Activated B cell treated with CpG ODN at 0.5 μM for 24 hours (primary cell): ENCODE measurements at regions of chr6 and their contacts with region 1.

Region 1: GRCh38 chr6:5143634-5144311 is 58.6 kb downstream of the PPP1R3G start:
- DNase-seq: peak; percentile 69
- ATAC-seq: peak; percentile 53
- H3K4me3 Mint-ChIP-seq: no peak overlapping the region
- H3K27ac Mint-ChIP-seq: peak overlapping the region; percentile 46
- H3K4me1 Mint-ChIP-seq: peaks cover 27% of the 10 kb centered on the region
- H3K27me3 Mint-ChIP-seq: no peaks in the 10 kb centered on the region
- CTCF ChIP-seq: peak; percentile 98

Region 2: DNA sequence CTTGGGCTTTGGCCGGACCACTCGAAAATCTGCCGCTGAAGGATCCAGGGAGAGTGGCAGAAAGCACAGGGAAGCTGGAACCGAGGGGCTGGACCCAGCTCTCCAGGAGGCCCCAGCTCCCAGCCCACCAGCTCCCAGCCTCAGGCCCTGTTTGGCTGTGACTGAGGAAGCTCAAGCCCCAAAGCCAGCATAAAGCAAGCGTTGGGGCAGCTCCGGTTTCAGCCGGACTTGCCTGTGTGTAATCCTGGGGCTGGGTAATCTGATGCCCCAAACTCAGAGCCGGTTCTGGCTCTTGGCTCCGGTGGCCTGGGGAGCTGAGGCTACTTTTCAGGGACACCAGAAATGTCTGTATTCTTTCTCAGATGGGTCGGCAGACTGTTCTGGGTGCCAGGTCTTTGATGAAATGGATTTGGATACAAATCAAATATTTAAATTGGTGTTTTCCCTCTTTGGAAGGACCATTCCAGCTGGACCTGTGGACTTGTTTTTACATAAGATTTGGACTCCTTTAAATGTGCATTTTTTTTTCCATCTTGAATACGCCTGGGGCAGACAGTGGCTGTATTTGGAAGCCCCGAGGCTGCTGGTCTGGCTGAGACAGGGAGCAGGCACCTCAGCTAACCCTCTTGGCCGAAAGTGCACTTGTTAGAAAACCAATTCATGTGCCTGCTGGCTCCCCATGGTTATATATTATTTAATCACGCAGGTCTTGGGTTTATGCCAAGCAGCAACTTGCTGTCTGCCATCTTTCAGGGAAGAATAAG is 169.6 kb before region 1 on chr6:
- CTCF ChIA-PET with region 1: no interaction called
- POLR2A ChIA-PET with region 1: no interaction called
- intact Hi-C with region 1: no loop called
- DNase-seq: no peak
- ATAC-seq: no peak
- H3K4me3 Mint-ChIP-seq: no peak overlapping the region
- H3K27ac Mint-ChIP-seq: no peak overlapping the region
- H3K4me1 Mint-ChIP-seq: no peaks in the 10 kb centered on the region
- H3K27me3 Mint-ChIP-seq: peaks cover 13% of the 10 kb centered on the region
- CTCF ChIP-seq: no peak

Region 3: DNA sequence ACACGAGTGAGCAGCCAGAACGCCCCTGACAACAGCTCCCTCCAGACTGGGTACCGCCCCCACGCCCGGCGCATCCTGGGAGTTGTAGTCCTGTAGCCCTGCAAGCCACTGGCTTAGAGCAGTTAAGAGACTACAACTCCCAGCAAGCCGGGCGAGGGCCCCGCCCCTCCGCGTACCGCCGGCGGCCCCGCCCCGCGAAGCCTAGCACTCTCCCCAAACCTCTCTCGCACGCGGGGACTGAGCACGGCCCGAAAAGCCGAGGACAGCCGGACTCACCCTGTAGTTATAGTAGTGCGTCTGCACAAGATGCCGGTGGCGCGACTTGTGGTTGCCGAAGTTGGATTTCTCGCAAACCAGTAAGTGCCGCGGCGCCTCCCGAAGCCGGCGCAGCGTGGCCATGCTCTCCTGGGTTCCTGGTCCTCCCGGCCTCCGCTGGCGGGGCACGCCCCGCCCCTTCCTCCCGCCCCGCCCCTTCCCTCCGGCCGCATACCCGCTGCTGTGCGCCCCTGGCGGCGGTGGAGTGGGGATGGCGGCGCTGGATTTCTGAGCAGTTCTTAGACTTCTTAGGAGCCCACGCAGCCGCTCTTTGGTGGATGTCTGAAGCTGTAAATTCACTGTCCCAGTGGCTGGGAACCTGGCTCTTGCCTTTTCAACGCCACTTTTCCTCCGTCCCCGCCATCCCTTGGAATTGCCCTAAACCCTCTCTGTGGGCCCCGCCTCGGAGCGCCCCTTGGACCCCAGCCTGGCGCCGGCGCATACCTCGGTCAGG is 140.0 kb before region 1 on chr6 and contains the start of gene RPP40:
- CTCF ChIA-PET with region 1: no interaction called
- POLR2A ChIA-PET with region 1: no interaction called
- intact Hi-C with region 1: loop called (anchors 5 kb)
- DNase-seq: peak; percentile 98
- ATAC-seq: peak; percentile 94
- H3K4me3 Mint-ChIP-seq: peak within 1 kb of the TSS; percentile 94
- H3K27ac Mint-ChIP-seq: peak within 1 kb of the TSS; percentile 98
- H3K4me1 Mint-ChIP-seq: peaks cover 13% of the 10 kb centered on the region
- H3K27me3 Mint-ChIP-seq: no peaks in the 10 kb centered on the region
- CTCF ChIP-seq: no peak
- total RNA-seq, gene RPP40: 5.9 and 7.1 TPM in 2 replicates

Region 4: GRCh38 chr6:5159148-5159547 is 15.4 kb after region 1 on chr6:
- CTCF ChIA-PET with region 1: no interaction called
- POLR2A ChIA-PET with region 1: no interaction called
- intact Hi-C with region 1: no loop called
- DNase-seq: no peak
- ATAC-seq: no peak
- H3K4me3 Mint-ChIP-seq: no peak overlapping the region
- H3K27ac Mint-ChIP-seq: no peak overlapping the region
- H3K4me1 Mint-ChIP-seq: no peaks in the 10 kb centered on the region
- H3K27me3 Mint-ChIP-seq: no peaks in the 10 kb centered on the region
- CTCF ChIP-seq: no peak

Region 5: GRCh38 chr6:5214570-5215052 is 70.8 kb after region 1 on chr6:
- CTCF ChIA-PET with region 1: interaction called, 12 read pairs
- POLR2A ChIA-PET with region 1: no interaction called
- intact Hi-C with region 1: no loop called
- DNase-seq: peak; percentile 20
- ATAC-seq: no peak
- H3K4me3 Mint-ChIP-seq: no peak overlapping the region
- H3K27ac Mint-ChIP-seq: no peak overlapping the region
- H3K4me1 Mint-ChIP-seq: peaks cover 11% of the 10 kb centered on the region
- H3K27me3 Mint-ChIP-seq: no peaks in the 10 kb centered on the region
- CTCF ChIP-seq: no peak

Region 6: DNA sequence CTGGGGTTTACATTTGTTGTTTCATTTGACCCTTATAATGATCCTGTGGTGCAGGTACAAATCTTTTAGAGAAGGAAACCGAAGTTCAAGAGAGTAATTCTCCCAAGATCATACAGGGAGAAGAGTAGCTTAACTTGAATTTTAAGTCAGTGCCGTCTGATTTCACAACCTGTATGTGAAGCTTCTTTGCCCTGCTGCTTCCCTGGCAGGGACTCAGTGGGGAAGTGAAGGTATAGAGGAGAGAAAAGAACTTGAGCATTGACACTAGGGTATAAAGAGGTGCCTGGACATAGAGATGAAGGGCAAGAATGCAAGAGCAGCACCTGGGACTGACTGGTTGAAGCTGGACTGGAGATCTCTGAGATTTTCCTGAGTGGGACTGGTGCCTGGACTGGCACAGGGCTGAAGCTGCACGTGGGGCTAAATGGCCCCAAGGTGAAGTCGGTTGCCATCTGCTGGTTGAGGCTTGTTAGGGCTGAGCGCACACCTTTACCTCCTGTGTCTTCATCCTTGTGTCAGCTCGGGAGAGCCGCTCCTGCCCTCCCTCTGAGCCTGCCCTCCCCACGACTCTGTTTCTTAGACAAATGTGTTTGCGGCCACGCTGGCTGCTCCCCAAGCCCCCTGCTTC is 159.3 kb after region 1 on chr6:
- CTCF ChIA-PET with region 1: interaction called, 93 read pairs
- POLR2A ChIA-PET with region 1: interaction called, 12 read pairs
- intact Hi-C with region 1: loop called (anchors 1 kb)
- DNase-seq: peak; percentile 40
- ATAC-seq: peak; percentile 70
- H3K4me3 Mint-ChIP-seq: peak overlapping the region; percentile 77
- H3K27ac Mint-ChIP-seq: peak overlapping the region; percentile 84
- H3K4me1 Mint-ChIP-seq: peaks cover 40% of the 10 kb centered on the region
- H3K27me3 Mint-ChIP-seq: no peaks in the 10 kb centered on the region
- CTCF ChIP-seq: no peak

Region 7: GRCh38 chr6:5398530-5398929 is 254.8 kb after region 1 on chr6:
- CTCF ChIA-PET with region 1: interaction called, 37 read pairs
- POLR2A ChIA-PET with region 1: no interaction called
- intact Hi-C with region 1: loop called (anchors 1 kb)
- DNase-seq: no peak
- ATAC-seq: peak; percentile 87
- H3K4me3 Mint-ChIP-seq: no peak overlapping the region
- H3K27ac Mint-ChIP-seq: no peak overlapping the region
- H3K4me1 Mint-ChIP-seq: peaks cover 2% of the 10 kb centered on the region
- H3K27me3 Mint-ChIP-seq: no peaks in the 10 kb centered on the region
- CTCF ChIP-seq: no peak

Region 8: DNA sequence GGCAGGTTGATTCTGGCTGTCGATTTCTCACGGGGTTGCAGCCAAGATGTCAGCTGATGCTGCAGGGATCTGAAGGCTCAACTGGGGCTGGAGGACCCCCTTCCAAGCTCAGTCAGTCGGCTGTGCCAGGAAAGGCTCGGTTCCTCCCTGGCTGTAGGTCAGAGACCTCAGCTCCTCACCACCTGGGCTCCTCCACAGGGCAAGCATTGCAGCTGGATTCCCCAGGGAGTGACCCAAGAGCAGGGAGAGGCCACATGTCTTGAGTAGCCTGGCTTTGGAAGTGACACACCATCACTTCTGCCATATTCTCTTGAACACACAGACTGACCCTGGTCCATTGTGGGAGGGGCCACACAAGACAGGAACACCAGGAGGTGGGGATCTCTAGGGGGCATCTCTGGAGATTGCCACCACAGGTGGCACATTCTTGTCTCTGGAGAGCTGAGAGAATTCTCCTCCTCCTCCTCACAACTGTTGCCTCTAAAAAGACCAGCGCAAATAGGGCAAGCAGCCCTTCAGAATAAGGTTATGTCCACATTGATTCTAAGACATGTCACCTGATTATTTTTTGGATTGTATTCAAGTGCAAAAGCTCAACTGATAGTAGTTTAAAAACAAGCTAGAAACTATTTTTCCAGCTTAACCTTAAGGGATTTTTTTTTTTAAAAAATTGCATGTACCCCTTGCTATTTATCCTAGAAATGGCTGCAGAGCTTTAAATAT is 592.4 kb after region 1 on chr6:
- CTCF ChIA-PET with region 1: no interaction called
- POLR2A ChIA-PET with region 1: no interaction called
- intact Hi-C with region 1: no loop called
- DNase-seq: no peak
- ATAC-seq: no peak
- H3K4me3 Mint-ChIP-seq: no peak overlapping the region
- H3K27ac Mint-ChIP-seq: no peak overlapping the region
- H3K4me1 Mint-ChIP-seq: no peaks in the 10 kb centered on the region
- H3K27me3 Mint-ChIP-seq: no peaks in the 10 kb centered on the region
- CTCF ChIP-seq: no peak

Region 9: DNA sequence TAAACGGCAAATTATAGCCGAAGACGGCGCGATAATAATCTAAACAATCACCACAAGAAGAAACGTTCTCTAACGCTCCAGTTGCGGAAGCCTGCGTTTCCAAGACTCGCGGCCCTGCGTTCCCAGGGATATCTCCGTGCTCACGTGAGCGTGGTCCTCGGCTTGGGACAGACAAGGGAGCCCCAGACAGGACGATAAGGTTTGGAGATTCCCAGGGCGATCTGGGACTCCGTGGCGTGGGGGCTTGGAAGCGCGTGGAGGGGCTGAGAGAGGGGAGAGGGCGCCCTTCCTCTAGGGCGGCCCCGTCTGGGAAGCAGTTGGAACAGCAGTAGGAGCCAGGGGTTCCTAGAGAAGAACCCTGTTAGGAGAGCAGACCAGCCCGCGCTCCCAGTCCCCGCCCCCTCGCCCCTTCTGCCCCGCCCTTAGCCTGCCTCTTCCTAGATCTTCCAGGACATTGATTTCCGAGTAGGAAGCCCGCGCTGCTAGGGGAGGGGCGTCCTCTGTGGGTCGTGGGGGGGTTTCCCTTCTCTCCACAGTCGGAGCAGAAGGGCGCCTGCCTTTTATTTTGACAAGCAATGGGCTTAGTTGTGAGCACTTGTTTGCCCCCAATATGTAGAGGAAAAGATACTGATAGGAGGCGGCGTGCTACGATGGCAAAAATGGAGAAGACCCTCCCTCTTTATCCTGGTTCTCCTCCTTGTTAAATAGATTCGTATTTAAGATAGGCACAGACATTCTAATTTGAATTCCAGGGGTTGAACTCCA is 852.4 kb after region 1 on chr6:
- CTCF ChIA-PET with region 1: no interaction called
- POLR2A ChIA-PET with region 1: no interaction called
- intact Hi-C with region 1: loop called (anchors 5 kb)
- DNase-seq: no peak
- ATAC-seq: no peak
- H3K4me3 Mint-ChIP-seq: peak overlapping the region; percentile 83
- H3K27ac Mint-ChIP-seq: peak overlapping the region; percentile 51
- H3K4me1 Mint-ChIP-seq: peaks cover 50% of the 10 kb centered on the region
- H3K27me3 Mint-ChIP-seq: peaks cover 80% of the 10 kb centered on the region
- CTCF ChIP-seq: no peak